Right ventricle myocardium inferior (tissue), 1 donor: ENCODE measurements at regions of chr2 and their contacts with region 1.

Region 1: GRCh38 chr2:121095257-121096080 is 189.5 kb downstream of the TFCP2L1 start:
- DNase-seq: no peak
- ATAC-seq: peak; percentile 14

Region 2: DNA sequence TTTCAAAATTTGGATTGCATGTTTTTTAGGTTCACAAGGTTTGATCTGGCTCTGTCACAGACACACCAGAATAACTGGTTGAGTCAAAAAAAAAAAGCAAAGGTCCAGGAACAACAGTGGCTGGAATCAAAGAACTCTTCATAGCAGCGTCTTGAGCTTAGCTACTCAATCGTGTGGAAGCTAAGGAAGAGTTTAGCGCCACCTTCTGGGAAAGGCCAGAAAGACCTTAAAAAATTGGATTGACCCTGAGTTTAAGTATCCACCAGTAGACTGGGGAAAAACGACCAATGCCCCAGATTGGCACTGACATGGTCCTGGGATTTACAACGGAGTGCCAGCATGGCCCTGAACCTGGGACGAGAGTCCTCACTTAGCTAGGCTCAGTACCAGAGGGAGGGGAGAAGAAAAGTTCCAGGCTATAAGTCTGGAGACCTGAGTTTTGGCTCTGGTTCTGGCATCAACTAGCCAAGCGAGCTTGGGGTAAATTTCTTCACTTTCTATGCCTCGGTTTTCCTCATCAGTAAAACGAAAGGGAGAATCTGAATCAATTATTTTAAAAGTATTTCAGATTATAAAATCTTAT is 260.7 kb after region 1 on chr2:
- intact Hi-C with region 1: loop called (anchors 2 kb)
- DNase-seq: no peak
- ATAC-seq: peak; percentile 27